Activated B cell treated with CpG ODN at 0.5 μM for 24 hours (primary cell): ENCODE measurements at regions of chr9 and their contacts with region 1.

Region 1: GRCh38 chr9:134698587-134699342 is 57.2 kb downstream of the COL5A1 start:
- DNase-seq: peak; percentile 41
- ATAC-seq: no peak
- H3K4me3 Mint-ChIP-seq: no peak overlapping the region
- H3K27ac Mint-ChIP-seq: no peak overlapping the region
- H3K4me1 Mint-ChIP-seq: no peaks in the 10 kb centered on the region
- H3K27me3 Mint-ChIP-seq: no peaks in the 10 kb centered on the region
- CTCF ChIP-seq: no peak

Region 2: GRCh38 chr9:134758949-134759607 is 60.3 kb after region 1 on chr9:
- CTCF ChIA-PET with region 1: no interaction called
- POLR2A ChIA-PET with region 1: no interaction called
- intact Hi-C with region 1: no loop called
- DNase-seq: no peak
- ATAC-seq: no peak
- H3K4me3 Mint-ChIP-seq: no peak overlapping the region
- H3K27ac Mint-ChIP-seq: no peak overlapping the region
- H3K4me1 Mint-ChIP-seq: no peaks in the 10 kb centered on the region
- H3K27me3 Mint-ChIP-seq: no peaks in the 10 kb centered on the region
- CTCF ChIP-seq: no peak

Region 3: DNA sequence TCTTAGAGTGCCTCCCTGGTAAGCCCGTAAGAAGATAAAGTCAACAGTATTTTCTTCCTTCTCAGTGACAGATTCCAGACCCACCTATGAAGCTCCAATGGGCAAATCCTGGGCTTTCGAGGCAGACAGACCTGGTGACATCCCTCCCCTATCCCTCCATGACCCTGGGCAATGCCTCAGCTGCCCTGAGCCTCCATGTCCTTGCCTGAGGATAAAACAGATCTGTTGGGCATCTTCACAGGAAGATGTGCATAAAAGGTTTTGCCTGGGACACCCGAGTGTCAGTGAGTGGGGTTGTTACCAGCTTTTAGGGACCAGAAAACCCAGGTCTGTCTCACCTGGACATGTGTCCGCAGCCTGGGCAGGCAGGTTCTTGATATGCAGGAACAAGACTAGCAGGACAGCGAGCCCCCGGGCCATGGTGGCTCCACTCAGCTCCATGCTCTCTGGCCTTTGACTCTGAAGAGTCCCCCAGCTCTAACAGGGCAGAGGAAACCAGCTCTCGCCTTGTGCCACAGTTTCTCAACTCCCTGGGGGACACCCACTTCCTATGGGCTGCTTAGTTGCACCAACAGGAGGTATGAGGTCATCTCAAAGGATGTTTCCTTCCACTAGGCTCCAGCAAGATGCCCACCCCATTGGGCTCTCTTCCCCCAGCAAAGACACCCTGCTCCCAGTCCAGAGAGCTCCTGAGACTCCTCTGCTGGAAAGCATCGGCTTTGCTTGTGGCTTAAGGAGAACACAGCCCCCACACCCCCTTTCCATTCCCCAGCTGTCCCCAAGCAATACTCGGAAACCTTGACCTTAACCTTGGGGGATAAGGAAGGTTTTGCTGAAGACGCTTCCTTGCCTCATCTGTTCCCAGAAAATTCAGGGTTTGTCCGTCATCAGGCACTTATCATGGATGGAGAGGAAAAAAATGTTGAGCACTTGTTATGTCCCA is 218.9 kb after region 1 on chr9 and contains the start of gene FCN1:
- CTCF ChIA-PET with region 1: no interaction called
- POLR2A ChIA-PET with region 1: no interaction called
- intact Hi-C with region 1: no loop called
- DNase-seq: no peak
- ATAC-seq: no peak
- H3K4me3 Mint-ChIP-seq: no peak within 1 kb of the TSS
- H3K27ac Mint-ChIP-seq: no peak within 1 kb of the TSS
- H3K4me1 Mint-ChIP-seq: peaks cover 3% of the 10 kb centered on the region
- H3K27me3 Mint-ChIP-seq: peaks cover 8% of the 10 kb centered on the region
- CTCF ChIP-seq: no peak
- total RNA-seq, gene FCN1: 0.44 and 0.83 TPM in 2 replicates

Region 4: GRCh38 chr9:135410831-135411473 is 712.2 kb after region 1 on chr9:
- CTCF ChIA-PET with region 1: interaction called, 3 read pairs
- POLR2A ChIA-PET with region 1: no interaction called
- intact Hi-C with region 1: loop called (anchors 1 kb)
- DNase-seq: no peak
- ATAC-seq: no peak
- H3K4me3 Mint-ChIP-seq: no peak overlapping the region
- H3K27ac Mint-ChIP-seq: no peak overlapping the region
- H3K4me1 Mint-ChIP-seq: peaks cover 2% of the 10 kb centered on the region
- H3K27me3 Mint-ChIP-seq: peaks cover 6% of the 10 kb centered on the region
- CTCF ChIP-seq: no peak